ENCODE measurements at regions of chr11 and their contacts with region 1.

Region 1: DNA sequence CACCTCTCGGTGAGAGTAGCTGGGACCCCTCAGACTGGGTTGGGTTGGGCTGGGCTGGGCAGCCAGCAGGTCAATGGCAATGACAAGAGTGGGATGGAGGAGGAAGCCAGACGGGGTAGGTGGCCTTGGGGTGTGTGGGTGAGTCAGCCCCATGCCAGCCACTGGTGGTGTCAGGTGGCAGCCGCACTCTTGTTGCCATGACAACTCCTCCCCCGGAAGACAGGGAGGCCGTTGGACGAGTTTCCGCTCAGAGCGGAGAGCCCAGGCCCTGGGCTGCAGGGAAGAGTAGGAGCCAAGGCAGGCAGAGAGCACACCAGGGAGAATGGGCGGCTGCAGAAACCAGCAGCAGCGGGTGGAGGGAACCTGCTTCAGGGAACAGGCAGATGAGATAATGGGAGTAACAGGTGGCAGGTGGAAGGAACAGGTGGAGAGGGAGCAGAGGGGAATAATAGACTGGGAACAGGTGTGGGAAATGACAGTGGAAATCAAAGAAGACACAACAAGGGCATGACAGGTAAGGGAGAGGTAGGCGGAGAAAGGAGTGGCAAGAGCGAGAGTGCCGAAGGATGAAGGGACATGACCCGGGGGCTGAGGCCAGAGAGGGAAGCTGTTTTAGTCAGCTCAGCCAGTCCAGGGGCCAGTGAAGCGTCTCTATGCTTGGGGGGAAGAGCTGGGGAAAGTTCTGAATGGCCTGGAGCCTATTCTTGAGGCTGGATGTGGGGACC is 8.6 kb downstream of the SPTBN2 start:
- H3K4me3 ChIP-seq: peak overlapping the region; percentile 6
- H3K27ac ChIP-seq: no peak overlapping the region
- H3K4me1 ChIP-seq: peaks cover 11% of the 10 kb centered on the region; the same call in 1 of the 2 replicates
- CTCF ChIP-seq: no peak

Region 2: GRCh38 chr11:67006139-67006884 is 285.9 kb after region 1 on chr11:
- CTCF ChIA-PET with region 1: interaction called, 10 read pairs
- POLR2A ChIA-PET with region 1: no interaction called
- H3K4me3 ChIP-seq: no peak overlapping the region
- H3K27ac ChIP-seq: no peak overlapping the region
- H3K4me1 ChIP-seq: no peaks in the 10 kb centered on the region
- CTCF ChIP-seq: no peak